T-cell (primary cell): ENCODE measurements at regions of chr13 and their contacts with region 1.

Region 1: GRCh38 chr13:42466123-42466522 is 107.8 kb upstream of the TNFSF11 start:
- DNase-seq: peak in 1 of 35 experiments; percentile 5
- ATAC-seq: peak; percentile 43 to 64 (median 54)
- H3K4me3 ChIP-seq: no peak overlapping the region
- H3K4me3 Mint-ChIP-seq: peak overlapping the region in 1 of 3 donors; percentile 61
- H3K27ac ChIP-seq: peak overlapping the region; percentile 33
- H3K27ac Mint-ChIP-seq: peak overlapping the region; percentile 40 to 78
- H3K4me1 ChIP-seq: peaks cover 0 to 11% of the 10 kb centered on the region in 2 experiments
- H3K4me1 Mint-ChIP-seq: peaks cover 20 to 34% (median 28%) of the 10 kb centered on the region in 3 donors
- H3K27me3 ChIP-seq: no peaks in the 10 kb centered on the region
- H3K27me3 Mint-ChIP-seq: no peaks in the 10 kb centered on the region

Region 2: GRCh38 chr13:40652588-40652940 is 1813.6 kb before region 1 on chr13:
- CTCF ChIA-PET with region 1: no interaction called
- POLR2A ChIA-PET with region 1: interaction called in 1 of 2 experiments, 10 read pairs
- DNase-seq: no peak
- ATAC-seq: no peak
- H3K4me3 ChIP-seq: peak overlapping the region in 1 of 2 donors; percentile 6
- H3K4me3 Mint-ChIP-seq: peak overlapping the region; percentile 61 to 96 (median 72)
- H3K27ac ChIP-seq: peak overlapping the region; percentile 62
- H3K27ac Mint-ChIP-seq: peak overlapping the region; percentile 83 to 84
- H3K4me1 ChIP-seq: peaks cover 32 to 63% of the 10 kb centered on the region in 2 experiments
- H3K4me1 Mint-ChIP-seq: peaks cover 95 to 97% (median 95%) of the 10 kb centered on the region in 3 donors
- H3K27me3 ChIP-seq: no peaks in the 10 kb centered on the region
- H3K27me3 Mint-ChIP-seq: no peaks in the 10 kb centered on the region

Region 3: GRCh38 chr13:42574435-42575311 is 108.5 kb after region 1 on chr13:
- CTCF ChIA-PET with region 1: no interaction called
- POLR2A ChIA-PET with region 1: no interaction called
- DNase-seq: peak in 22 of 35 experiments; percentile 2 to 32 (median 14)
- ATAC-seq: peak; percentile 68 to 81 (median 76)
- H3K4me3 ChIP-seq: peak overlapping the region; percentile 50 to 80
- H3K4me3 Mint-ChIP-seq: peak overlapping the region; percentile 77 to 94 (median 85)
- H3K27ac ChIP-seq: no peak overlapping the region
- H3K27ac Mint-ChIP-seq: no peak overlapping the region
- H3K4me1 ChIP-seq: peaks cover 17 to 18% of the 10 kb centered on the region in 2 experiments
- H3K4me1 Mint-ChIP-seq: peaks cover 20 to 26% (median 26%) of the 10 kb centered on the region in 3 donors
- H3K27me3 ChIP-seq: peaks cover 0 to 14% of the 10 kb centered on the region in 2 experiments
- H3K27me3 Mint-ChIP-seq: peaks cover 16 to 30% of the 10 kb centered on the region in 2 donors